WTC11 (cell line): ENCODE measurements at regions of chr22 and their contacts with region 1.

Region 1: GRCh38 chr22:41800348-41801146 is at the start of gene CCDC134:
- DNase-seq: peak; percentile 91
- ATAC-seq: peak; percentile 95
- H3K4me3 Mint-ChIP-seq: peak within 1 kb of the TSS; percentile 96
- H3K27ac Mint-ChIP-seq: peak within 1 kb of the TSS; percentile 98
- H3K4me1 Mint-ChIP-seq: peaks cover 30% of the 10 kb centered on the region
- H3K27me3 Mint-ChIP-seq: no peaks in the 10 kb centered on the region
- CTCF ChIP-seq: no peak
- total RNA-seq, gene CCDC134: 19.0 to 21.3 TPM (median 19.2 TPM) in 3 replicates

Region 2: DNA sequence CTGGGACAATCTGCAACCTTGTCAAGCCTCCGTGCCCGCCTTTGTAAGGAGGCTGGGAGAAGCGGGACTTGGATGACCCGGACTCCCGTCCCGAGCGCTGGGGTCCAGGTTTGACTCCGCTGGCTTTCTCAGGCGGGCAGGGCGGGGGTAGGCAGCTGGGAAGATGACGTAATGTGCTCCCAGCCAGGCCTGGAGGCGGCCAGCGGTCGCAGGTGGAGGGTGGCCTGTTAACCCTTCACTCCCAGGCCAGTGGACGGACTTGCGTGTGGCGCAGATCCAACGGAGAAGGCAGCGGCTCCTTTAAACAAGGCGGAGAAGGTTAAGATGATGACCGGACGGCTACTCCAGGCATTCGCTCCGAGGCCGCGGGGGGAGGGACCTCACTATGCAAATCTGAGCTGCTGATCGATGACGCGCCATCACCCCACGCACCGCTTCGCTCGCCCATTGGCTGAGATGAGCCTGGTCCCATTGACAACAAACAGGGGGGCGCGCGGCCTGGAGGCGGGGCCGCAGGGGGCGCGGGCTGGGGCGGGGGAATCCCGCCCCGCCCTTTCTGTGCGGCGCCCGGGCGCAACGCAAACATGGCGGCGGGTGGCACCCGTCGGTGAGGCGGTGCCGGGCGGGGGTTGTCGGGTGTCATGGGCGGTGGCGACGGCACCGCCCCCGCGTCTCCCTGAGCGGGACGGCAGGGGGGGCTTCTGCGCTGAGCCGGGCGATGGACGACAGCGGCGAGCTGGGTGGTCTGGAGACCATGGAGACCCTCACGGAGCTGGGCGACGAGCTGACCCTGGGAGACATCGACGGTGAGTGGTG is 32.2 kb after region 1 on chr22 and contains the start of gene SREBF2:
- CTCF ChIA-PET with region 1: no interaction called
- POLR2A ChIA-PET with region 1: interaction called, 21 read pairs
- DNase-seq: peak; percentile 100
- ATAC-seq: peak; percentile 92
- H3K4me3 Mint-ChIP-seq: peak within 1 kb of the TSS; percentile 96
- H3K27ac Mint-ChIP-seq: peak within 1 kb of the TSS; percentile 100
- H3K4me1 Mint-ChIP-seq: peaks cover 45% of the 10 kb centered on the region
- H3K27me3 Mint-ChIP-seq: no peaks in the 10 kb centered on the region
- CTCF ChIP-seq: no peak
- total RNA-seq, gene SREBF2: 151 to 173 TPM (median 171 TPM) in 3 replicates